Cardiac septum (tissue), 1 donor: ENCODE measurements at regions of chr7 and their contacts with region 1.

Region 1: GRCh38 chr7:102390697-102391484 is 5.3 kb upstream of the PRKRIP1 start:
- DNase-seq: peak; percentile 90

Region 2: GRCh38 chr7:102279537-102280400 is 111.1 kb before region 1 on chr7:
- intact Hi-C with region 1: loop called (anchors 1 kb)
- DNase-seq: no peak

Region 3: GRCh38 chr7:102284891-102285539 is 105.9 kb before region 1 on chr7:
- intact Hi-C with region 1: loop called (anchors 2 kb)
- DNase-seq: peak; percentile 90

Region 4: DNA sequence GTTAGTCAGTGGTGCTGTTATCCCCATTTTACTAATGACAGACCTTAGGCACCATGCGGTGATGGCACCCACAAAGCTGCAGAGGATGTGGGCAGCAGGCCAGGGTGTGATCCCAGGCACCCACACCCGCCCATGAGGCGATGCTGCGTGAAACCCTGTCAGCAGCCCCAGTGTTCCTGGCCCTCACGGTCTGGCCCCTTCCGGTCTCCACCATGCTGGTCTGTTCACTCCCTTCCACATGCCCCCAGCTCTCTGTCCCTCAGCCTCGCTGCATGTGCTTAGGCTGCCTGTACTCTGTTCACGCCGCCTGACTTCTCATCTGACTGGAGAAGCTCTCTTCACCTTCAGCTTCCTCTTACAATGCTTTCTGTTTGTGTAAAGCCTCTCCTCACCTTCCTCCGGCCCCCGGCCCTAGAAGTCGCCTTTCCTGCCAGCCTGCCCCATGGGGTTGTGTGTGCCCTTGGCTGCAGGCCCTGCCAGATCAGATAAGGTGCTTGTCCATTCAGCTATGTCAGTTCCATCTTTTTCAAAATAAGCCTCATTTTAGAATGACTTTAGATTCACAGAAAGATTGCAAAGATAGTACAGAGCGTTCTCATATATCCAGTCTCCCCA is 24.9 kb after region 1 on chr7:
- intact Hi-C with region 1: no loop called
- DNase-seq: peak; percentile 80